Aorta (tissue), 5 donors: ENCODE measurements at regions of chr4 and their contacts with region 1.

Region 1: DNA sequence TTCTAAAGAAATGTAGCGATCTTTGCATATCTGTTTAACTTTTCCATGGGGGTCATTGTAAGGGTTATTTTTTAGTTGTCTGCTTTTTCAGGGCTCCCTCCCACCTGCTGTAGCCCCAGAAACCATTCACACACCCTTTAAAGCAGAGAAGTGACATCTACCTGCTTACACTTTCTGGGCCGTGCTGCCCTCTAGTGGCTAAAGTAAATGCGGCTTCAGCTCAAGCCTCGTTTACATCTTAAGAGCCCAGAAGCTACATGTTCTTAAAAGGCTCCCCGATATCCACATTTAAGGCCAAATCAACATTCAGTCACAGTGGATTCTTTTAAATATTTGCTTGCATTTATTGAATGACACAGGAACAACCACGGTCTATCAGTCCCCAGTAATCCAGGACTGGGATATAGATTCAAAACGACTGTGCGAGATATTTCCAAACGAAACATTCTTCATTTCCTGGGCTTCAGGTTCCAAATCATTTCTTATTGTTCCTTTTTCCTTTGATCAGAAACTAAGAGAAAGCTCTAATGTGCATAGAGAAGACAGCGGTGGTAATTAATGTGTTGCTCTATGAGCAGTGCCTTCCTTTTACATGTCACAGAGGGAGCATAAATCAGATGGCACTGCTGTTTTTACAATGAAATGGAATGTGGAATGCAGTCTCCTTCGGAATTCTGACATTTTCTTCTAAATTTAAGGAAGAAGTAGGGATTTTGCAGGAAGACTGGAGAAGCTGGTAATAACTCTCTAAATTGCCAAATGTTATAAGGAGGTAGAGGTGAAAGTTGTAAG is 119.9 kb downstream of the RASGEF1B start:
- DNase-seq: peak; percentile 71 to 86
- ATAC-seq: peak; percentile 84
- H3K4me3 ChIP-seq: no peak overlapping the region
- H3K27ac ChIP-seq: no peak overlapping the region
- H3K4me1 ChIP-seq: no peaks in the 10 kb centered on the region
- H3K27me3 ChIP-seq: no peaks in the 10 kb centered on the region

Region 2: DNA sequence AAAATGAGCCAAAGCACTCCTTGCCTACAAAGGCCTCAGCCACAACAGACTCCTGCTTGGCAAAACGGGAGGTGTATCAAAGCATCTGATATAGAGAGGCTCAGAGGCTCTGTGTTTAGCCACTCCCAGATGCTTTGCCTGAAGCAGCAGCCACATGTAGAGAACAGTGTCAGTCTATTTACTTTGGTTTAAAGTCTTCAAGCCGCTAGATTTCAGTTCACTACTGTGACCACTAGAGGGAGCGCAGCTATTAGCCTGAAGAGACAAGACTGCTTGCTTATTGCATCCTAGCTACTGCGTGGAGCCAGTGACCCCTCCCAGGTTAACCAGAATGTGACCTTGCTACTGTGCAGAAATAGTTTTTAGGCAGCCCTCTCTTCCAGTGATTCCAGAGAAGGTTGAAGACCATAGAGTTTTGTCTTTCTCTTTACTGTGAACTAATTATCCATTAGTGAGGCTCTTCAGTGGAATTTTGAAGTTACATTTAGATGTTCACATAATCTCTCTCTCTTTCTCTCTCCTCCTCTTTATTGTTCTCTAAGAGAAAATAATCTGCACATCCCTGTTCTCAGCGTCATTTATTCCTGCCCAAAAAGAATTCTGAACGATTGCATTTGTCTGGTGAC is 282.0 kb before region 1 on chr4:
- intact Hi-C with region 1: loop called (anchors 2 kb)
- DNase-seq: peak in 1 of 2 donors; percentile 46
- ATAC-seq: peak; percentile 86
- H3K4me3 ChIP-seq: no peak overlapping the region
- H3K27ac ChIP-seq: no peak overlapping the region
- H3K4me1 ChIP-seq: no peaks in the 10 kb centered on the region
- H3K27me3 ChIP-seq: peaks cover 0 to 5% of the 10 kb centered on the region in 2 donors